H1 (cell line): ENCODE measurements at regions of chr7 and their contacts with region 1.

Region 1: DNA sequence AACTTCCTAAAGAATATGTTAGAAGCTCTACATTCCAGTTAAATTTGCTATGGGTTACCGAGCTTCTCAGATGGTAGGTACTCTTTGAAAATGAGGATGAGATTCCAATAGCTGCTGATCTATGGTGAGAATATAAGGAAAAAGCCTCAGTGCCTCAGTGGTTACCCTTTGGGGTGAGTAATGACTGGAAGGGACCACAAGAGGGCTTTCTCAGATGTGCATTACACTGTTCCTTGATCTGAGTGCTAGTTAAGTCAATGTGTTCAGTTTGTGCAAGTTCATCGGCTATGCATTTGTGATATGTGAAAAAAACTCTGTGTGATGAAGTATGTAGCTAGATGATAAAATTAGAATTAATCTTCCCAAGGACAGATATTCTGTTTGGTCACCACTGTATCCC is 3.5 kb downstream of the NRCAM start:
- DNase-seq: no peak
- H3K4me3 ChIP-seq: no peak overlapping the region
- H3K27ac ChIP-seq: no peak overlapping the region
- H3K4me1 ChIP-seq: peaks cover 6 to 13% (median 10%) of the 10 kb centered on the region in 4 experiments; a peak in 5 of 7 replicates
- H3K27me3 ChIP-seq: peaks cover 6 to 35% (median 26%) of the 10 kb centered on the region in 4 experiments
- CTCF ChIP-seq: peak in 2 of 3 experiments; percentile 63 to 72; a peak in 3 of 4 replicates
- EP300 ChIP-seq: no peak
- POLR2A ChIP-seq: no peak
- RAD21 ChIP-seq: peak; percentile 53 to 65

Region 2: GRCh38 chr7:108181073-108181985 is 271.4 kb before region 1 on chr7:
- CTCF ChIA-PET with region 1: interaction called, 10 read pairs
- POLR2A ChIA-PET with region 1: no interaction called
- DNase-seq: peak; percentile 64 to 70
- H3K4me3 ChIP-seq: peak overlapping the region in 1 of 4 experiments; percentile 46; a peak in 2 of 8 replicates
- H3K27ac ChIP-seq: no peak overlapping the region
- H3K4me1 ChIP-seq: no peaks in the 10 kb centered on the region; a peak in 3 of 7 replicates
- H3K27me3 ChIP-seq: no peaks in the 10 kb centered on the region
- CTCF ChIP-seq: peak in 2 of 3 experiments; percentile 39 to 52; a peak in 2 of 4 replicates
- EP300 ChIP-seq: peak in 1 of 2 experiments; percentile 41; a peak in 1 of 3 replicates
- POLR2A ChIP-seq: no peak
- RAD21 ChIP-seq: peak; percentile 73 to 82

Region 3: GRCh38 chr7:108222236-108222892 is 230.4 kb before region 1 on chr7:
- CTCF ChIA-PET with region 1: interaction called, 10 read pairs
- POLR2A ChIA-PET with region 1: no interaction called
- DNase-seq: no peak
- H3K4me3 ChIP-seq: no peak overlapping the region
- H3K27ac ChIP-seq: no peak overlapping the region
- H3K4me1 ChIP-seq: peaks cover 0 to 5% (median 0%) of the 10 kb centered on the region in 4 experiments; a peak in 1 of 7 replicates
- H3K27me3 ChIP-seq: no peaks in the 10 kb centered on the region
- CTCF ChIP-seq: peak; percentile 30 to 38 (median 33)
- EP300 ChIP-seq: no peak
- POLR2A ChIP-seq: no peak
- RAD21 ChIP-seq: peak; percentile 59 to 65

Region 4: DNA sequence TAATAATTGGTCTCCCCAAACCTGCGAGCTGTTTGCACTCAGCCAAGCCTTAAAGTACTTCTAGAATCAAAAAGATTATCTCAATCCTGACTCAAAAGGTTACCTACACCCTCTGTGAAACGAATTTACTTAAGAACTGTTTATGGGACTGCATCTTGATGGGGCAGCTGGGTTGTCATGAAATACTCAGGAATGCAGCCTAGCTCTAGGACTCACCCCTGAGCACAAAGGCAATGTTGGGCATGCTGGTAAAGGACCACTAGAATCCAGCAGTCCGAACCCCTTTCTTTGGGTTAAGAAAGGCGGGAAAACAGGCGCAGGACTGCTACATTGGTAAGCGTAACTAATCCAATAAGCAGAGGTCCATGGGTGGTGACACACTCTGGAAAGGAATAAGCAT is 113.4 kb before region 1 on chr7:
- CTCF ChIA-PET with region 1: no interaction called
- POLR2A ChIA-PET with region 1: no interaction called
- DNase-seq: no peak
- H3K4me3 ChIP-seq: no peak overlapping the region
- H3K27ac ChIP-seq: no peak overlapping the region
- H3K4me1 ChIP-seq: 0 out of 7 replicates have a peak, but pooled peaks cover 0 to 2% (median 0%) of the 10 kb centered on the region in 4 experiments
- H3K27me3 ChIP-seq: no peaks in the 10 kb centered on the region
- CTCF ChIP-seq: no peak
- EP300 ChIP-seq: no peak
- POLR2A ChIP-seq: no peak
- RAD21 ChIP-seq: no peak

Region 5: GRCh38 chr7:108430664-108431063 is 22.1 kb before region 1 on chr7:
- CTCF ChIA-PET with region 1: interaction called, 11 read pairs
- POLR2A ChIA-PET with region 1: interaction called, 4 read pairs
- DNase-seq: no peak
- H3K4me3 ChIP-seq: no peak overlapping the region
- H3K27ac ChIP-seq: no peak overlapping the region
- H3K4me1 ChIP-seq: no peaks in the 10 kb centered on the region
- H3K27me3 ChIP-seq: no peaks in the 10 kb centered on the region
- CTCF ChIP-seq: no peak
- EP300 ChIP-seq: no peak
- POLR2A ChIP-seq: no peak
- RAD21 ChIP-seq: no peak

Region 6: GRCh38 chr7:108468246-108468645 is 15.5 kb after region 1 on chr7:
- CTCF ChIA-PET with region 1: interaction called, 12 read pairs
- POLR2A ChIA-PET with region 1: interaction called, 3 read pairs
- DNase-seq: no peak
- H3K4me3 ChIP-seq: no peak overlapping the region
- H3K27ac ChIP-seq: 0 out of 2 replicates have a peak overlapping the region, but pooled peaks have one; percentile 7
- H3K4me1 ChIP-seq: peaks cover 0 to 5% (median 2%) of the 10 kb centered on the region in 4 experiments; a peak in 2 of 7 replicates
- H3K27me3 ChIP-seq: no peaks in the 10 kb centered on the region
- CTCF ChIP-seq: no peak
- EP300 ChIP-seq: no peak
- POLR2A ChIP-seq: no peak
- RAD21 ChIP-seq: no peak